Dendritic cell treated with granulocyte-macrophage colony-stimulating factor and Interleukin-4, amounts not matched to agents 40 ng/mL and 50 ng/mL, for 4 days (primary cell): ENCODE measurements at regions of chr1 and their contacts with region 1.

Region 1: DNA sequence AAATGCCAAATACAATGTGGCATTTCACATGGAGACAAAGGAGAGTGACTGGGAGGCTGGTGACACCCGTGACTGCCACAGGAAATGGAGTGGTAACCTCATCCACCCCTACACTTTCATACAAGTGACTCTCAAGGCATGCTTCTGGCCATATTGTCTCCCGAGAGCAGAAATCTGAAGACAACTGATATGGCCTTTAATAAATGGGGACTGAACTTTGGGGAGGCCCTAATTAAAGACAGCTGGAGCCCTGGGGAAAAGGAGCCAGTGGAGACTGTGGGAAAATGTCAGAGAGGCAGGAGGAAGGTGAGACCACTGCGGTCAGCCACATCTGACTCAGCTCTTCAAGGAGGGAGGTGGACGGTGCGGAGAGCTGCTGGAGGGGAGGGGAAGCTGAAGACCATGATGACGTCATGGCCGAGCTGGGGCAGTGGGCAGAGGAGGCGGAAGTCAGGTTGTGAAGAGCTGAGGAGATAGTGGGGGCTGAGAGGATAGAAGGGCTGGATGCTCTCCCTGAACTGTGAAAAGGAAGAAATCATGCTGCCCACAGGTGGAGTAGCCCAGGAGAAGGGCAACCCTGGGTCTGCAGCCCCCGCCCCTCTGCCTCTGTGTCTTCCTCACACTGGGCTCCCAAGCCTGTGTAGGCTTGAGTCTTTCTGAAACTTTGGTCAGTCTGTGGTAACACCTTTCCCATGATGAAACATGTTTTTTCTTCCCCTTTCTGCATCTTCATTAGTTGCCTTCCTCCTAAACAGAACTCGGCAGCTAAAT is 14.0 kb upstream of the NCF2 start:
- H3K4me3 Mint-ChIP-seq: peak overlapping the region; percentile 46
- H3K27ac Mint-ChIP-seq: peak overlapping the region; percentile 97
- H3K4me1 Mint-ChIP-seq: peaks cover 86% of the 10 kb centered on the region
- H3K27me3 Mint-ChIP-seq: no peaks in the 10 kb centered on the region

Region 2: GRCh38 chr1:183404456-183404855 is 199.8 kb before region 1 on chr1:
- intact Hi-C with region 1: no loop called
- H3K4me3 Mint-ChIP-seq: no peak overlapping the region
- H3K27ac Mint-ChIP-seq: no peak overlapping the region
- H3K4me1 Mint-ChIP-seq: no peaks in the 10 kb centered on the region
- H3K27me3 Mint-ChIP-seq: peaks cover 36% of the 10 kb centered on the region

Region 3: DNA sequence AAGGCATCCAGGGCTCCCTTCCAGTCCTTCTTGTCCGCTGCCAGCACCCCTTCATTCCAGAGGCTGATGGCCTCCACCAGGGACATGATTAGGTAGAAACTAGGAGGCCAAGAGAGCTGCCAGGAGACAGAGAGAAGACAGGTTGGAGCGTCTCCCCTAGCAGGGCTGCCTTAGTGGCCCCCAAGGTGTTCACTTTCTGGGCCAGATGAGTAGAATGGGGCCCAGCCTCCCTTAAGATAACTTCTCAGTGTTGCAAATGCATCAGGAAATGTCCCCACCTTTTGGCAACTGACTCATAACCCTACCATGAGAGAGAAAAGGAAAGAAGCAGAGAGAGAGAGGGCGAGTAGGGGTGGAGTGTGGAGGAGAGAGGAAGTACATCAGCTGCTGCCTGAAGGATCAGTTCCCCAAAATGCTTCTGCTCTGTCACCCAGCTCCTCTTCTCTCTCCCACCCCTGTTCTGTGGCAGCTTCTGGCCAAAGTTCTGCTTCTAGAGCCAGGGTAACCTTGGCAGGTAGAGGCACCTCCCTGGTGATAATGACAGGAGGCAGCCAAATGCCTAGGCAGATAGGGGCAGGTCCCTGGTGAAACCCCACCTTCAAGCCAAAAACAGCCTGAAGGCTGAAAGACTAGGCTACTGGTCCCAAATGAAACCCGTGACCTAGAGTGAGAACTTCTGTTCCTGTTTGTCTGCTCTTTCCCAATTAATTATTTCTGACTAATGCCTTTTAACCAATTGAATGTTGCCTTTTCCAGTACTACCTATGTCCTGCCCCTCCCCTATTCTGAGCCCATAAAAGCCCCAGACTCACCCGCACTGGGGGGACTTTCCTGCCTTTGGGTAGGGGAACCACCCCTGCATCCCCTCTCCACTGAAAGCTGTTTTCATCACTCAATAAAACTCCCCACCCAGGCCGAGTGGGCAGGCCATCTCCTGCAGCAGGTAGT is 13.7 kb before region 1 on chr1 and contains the start of gene NCF2:
- intact Hi-C with region 1: loop called (anchors 1 kb)
- H3K4me3 Mint-ChIP-seq: peak within 1 kb of the TSS; percentile 93
- H3K27ac Mint-ChIP-seq: peak within 1 kb of the TSS; percentile 95
- H3K4me1 Mint-ChIP-seq: peaks cover 48% of the 10 kb centered on the region
- H3K27me3 Mint-ChIP-seq: no peaks in the 10 kb centered on the region